ENCODE measurements at regions of chr1 and their contacts with region 1.

Region 1: DNA sequence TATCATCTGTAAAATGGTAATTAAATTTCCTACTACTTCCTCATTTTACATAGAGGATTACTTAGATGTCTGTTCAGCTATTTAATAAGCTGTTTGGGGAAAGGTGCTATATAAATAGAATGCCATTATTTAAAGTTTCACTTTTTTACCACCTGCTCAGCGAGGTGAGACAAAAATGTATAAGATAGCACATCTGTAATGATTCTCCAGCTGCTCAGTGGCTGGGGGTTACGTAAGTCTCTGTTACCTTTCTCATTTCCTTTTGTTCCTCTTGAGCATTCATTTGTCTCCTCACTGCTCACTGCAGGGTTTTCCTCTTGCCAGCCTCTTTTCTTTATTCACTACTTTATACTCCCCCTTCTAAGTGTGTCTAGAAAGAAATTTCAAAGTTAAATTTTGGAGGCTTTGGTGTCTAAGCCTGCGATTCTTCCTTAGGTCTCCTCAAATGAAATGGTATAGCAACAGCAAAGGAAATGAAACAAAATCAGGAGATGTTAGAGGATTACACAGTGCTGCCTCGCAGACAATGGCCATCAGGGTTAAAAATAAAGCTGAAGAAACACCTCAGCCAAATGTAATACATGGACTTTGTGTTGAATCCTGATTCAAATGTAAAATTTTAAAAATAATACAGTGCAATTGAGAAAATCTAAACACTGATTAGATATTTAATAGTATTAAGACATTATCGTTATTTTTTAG is 6.8 kb downstream of the RGS8 start:
- DNase-seq: no peak
- ATAC-seq: no peak
- H3K4me3 ChIP-seq: no peak overlapping the region
- H3K27ac ChIP-seq: no peak overlapping the region
- H3K4me1 ChIP-seq: peaks cover 0 to 1% of the 10 kb centered on the region in 2 donors
- H3K27me3 ChIP-seq: no peaks in the 10 kb centered on the region

Region 2: DNA sequence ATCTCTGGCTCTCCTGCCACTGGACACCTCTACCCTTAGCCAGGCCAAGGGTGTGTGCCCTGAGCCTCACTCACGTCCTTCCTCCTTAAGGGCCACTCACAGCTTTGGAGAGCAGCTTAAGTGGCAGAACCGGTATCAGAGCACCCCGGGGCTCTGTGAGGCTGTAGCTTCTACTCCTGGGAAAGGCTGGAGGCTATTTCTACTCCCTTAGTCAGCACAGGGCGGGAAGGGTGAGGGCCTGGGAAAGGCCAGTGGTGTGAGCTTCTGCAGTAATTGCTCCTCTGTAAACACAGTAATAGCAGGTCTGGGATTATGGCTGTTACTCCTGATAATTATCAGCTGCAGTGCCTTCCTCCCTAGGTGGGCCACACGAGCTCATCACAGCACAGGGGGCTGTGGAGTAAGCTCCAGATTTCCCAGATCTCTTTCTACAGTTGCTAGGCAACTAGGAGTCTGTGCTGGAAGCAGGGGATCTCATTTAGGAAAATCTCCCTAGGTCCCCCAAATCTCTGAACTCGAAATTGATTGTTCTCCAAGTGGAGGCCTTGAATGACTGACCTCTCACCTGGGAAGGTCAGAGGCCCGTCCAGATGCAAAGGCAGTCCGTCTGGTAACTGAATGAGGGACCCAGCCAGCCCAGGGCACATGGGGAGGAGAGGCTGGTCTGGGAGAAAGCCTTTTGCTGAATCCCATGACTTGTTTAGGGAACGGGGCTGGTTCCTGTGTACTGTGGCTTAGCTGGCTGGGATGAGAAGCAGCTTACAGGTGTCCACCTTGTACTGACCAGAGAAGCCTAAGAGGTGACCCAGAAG is 1559.7 kb before region 1 on chr1:
- intact Hi-C with region 1: no loop called
- DNase-seq: no peak
- ATAC-seq: no peak
- H3K4me3 ChIP-seq: no peak overlapping the region
- H3K27ac ChIP-seq: no peak overlapping the region
- H3K4me1 ChIP-seq: peaks cover 0 to 3% of the 10 kb centered on the region in 2 donors
- H3K27me3 ChIP-seq: no peaks in the 10 kb centered on the region

Region 3: DNA sequence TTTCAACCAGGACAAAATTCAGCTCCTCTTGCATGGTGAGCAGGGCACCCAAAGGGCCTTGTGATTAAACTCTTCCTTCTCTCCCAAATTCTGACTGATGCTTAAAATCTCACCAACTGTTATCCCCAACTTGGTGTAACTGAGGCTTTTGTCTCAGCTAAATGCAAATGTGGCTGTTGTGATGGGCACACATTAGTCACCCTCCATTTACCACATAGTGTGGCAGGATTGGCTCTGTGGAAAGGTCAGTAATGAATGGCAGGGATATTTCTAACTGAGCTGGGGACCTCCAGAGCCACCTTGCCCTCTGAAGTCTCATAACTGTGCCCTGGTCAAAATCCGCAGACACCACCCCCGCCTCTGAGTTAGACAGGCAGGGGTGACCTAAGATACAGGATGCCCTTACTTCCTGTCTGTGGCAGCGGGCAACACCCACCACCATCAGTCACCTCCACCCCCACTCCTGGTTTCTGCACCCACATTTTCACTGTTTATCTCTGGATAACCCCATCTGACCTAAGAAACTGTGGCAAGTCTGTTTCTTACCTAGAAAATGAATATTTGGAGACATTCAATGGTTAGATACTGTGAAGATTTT is 48.0 kb before region 1 on chr1:
- intact Hi-C with region 1: loop called in 1 of 2 experiments (anchors 5 kb)
- DNase-seq: no peak
- ATAC-seq: no peak
- H3K4me3 ChIP-seq: no peak overlapping the region
- H3K27ac ChIP-seq: no peak overlapping the region
- H3K4me1 ChIP-seq: no peaks in the 10 kb centered on the region
- H3K27me3 ChIP-seq: no peaks in the 10 kb centered on the region